H1 (cell line): ENCODE measurements at regions of chr11 and their contacts with region 1.

Region 1: DNA sequence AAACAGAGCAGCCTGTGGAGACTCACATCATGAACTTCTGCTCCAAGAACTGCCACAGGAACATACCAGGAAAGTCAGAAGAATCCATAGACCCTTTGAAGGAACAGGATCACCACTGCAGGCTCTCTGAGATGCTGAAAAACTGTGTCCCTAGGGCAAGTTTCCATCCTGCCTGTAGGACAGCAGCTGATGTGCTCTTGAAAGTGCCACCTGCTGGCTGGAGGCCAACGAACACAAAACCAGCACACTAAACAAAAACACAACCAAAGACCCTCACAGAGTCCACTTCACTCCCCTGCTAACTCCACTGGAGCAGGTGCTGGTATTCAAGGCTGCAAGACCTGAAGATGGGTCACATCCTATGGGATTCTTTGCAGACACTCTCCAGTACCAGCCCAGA is 12.0 kb upstream of the NXPE1 start:
- DNase-seq: no peak
- H3K4me3 ChIP-seq: no peak overlapping the region
- H3K27ac ChIP-seq: no peak overlapping the region
- H3K4me1 ChIP-seq: peaks cover 2 to 9% (median 5%) of the 10 kb centered on the region in 4 experiments; a peak in 4 of 7 replicates
- H3K27me3 ChIP-seq: no peaks in the 10 kb centered on the region
- CTCF ChIP-seq: peak; percentile 5 to 38 (median 31)
- EP300 ChIP-seq: no peak
- POLR2A ChIP-seq: no peak
- RAD21 ChIP-seq: peak in 1 of 2 experiments; percentile 20; a peak in 2 of 4 replicates

Region 2: GRCh38 chr11:114586797-114587196 is 15.1 kb after region 1 on chr11:
- CTCF ChIA-PET with region 1: interaction called, 10 read pairs
- POLR2A ChIA-PET with region 1: no interaction called
- DNase-seq: no peak
- H3K4me3 ChIP-seq: no peak overlapping the region
- H3K27ac ChIP-seq: no peak overlapping the region
- H3K4me1 ChIP-seq: no peaks in the 10 kb centered on the region
- H3K27me3 ChIP-seq: no peaks in the 10 kb centered on the region
- CTCF ChIP-seq: peak in 2 of 3 experiments; percentile 58 to 65; a peak in 3 of 4 replicates
- EP300 ChIP-seq: no peak
- POLR2A ChIP-seq: no peak
- RAD21 ChIP-seq: peak; percentile 83 to 84